ENCODE measurements at regions of chr14 and their contacts with region 1.

Region 1: DNA sequence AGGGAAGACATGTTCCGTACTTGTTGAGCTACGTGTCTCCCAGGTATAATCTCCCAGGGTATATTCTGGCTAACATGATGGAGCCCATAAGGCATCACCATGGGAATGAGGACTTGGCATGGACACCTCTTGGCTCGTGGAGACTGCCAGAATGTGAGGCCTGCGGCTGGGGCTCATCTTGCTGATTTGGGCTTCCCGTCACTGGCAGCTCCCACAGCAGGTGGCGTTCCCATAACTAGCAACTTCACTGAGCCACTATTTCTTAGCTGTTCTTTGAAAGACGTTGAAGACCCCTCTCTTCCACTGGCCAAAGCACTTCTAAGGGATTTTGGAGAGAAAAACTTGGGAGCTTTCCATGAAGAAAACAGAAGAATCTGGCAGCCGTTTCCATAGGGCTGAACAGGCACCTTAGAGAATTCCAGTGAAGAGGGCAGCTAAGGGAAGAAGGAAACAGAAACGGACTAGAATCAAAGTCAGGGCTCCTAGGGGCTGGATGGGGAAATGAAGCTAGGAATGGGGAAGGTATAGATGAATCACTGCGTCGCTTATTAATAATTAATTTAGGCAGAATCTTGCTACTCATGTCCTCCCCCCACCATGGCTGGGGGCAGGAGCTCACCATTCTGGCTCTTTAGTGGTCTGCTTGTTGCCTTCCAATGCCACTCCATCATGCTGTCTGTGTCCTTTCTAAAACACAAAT is 39.7 kb upstream of the FOS start:
- DNase-seq: no peak
- ATAC-seq: no peak
- H3K4me3 ChIP-seq: no peak overlapping the region
- H3K27ac ChIP-seq: peak overlapping the region; percentile 87 to 98 (median 93)
- H3K4me1 ChIP-seq: peaks cover 40 to 43% of the 10 kb centered on the region in 2 donors
- H3K27me3 ChIP-seq: no peaks in the 10 kb centered on the region
- CTCF ChIP-seq: peak in 4 of 5 experiments; percentile 14 to 37 (median 22)
- POLR2A ChIP-seq: no peak

Region 2: DNA sequence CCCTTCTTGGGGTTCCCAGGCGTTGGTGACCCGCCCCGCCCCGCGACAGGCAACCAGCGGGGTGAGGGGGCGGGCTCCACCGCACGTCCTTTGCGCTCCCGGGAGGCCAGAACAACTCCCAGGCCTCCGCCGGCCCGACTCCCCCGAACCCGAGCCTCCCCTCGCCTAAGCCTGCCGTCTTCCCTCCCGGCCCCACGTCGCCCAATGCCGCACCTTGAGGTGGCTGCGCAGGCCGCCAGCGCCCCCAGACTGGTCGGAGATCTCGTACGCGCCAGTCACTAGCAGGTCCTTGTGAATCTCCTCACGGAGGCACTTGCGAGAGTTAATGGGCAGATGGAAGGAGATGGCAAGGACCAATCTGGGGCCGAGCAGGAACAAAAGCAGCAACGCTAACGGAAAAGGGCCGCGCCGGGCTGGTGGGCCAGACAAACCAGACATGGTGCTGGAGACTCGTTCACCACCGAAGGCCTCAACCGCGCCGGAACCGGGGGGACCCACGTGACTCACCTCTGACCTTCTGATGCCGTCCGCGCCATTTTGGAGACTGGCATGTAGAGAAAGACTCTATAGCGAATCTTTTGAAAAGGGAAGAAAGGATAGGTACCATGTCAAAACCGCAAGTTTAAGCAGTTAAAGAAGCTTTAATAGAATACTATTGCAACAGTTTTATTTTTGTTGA is 62.6 kb before region 1 on chr14 and contains the start of gene TMED10:
- in situ Hi-C with region 1: no loop called
- intact Hi-C with region 1: loop called (anchors 1 kb)
- DNase-seq: peak; percentile 86 to 87
- ATAC-seq: peak; percentile 93
- H3K4me3 ChIP-seq: peak within 1 kb of the TSS; percentile 78 to 97 (median 92)
- H3K27ac ChIP-seq: peak within 1 kb of the TSS; percentile 98 to 100 (median 98)
- H3K4me1 ChIP-seq: peaks cover 33 to 35% of the 10 kb centered on the region in 2 donors
- H3K27me3 ChIP-seq: no peaks in the 10 kb centered on the region
- CTCF ChIP-seq: peak in 2 of 5 experiments; percentile 12 to 15
- POLR2A ChIP-seq: peak; percentile 84 to 88
- total RNA-seq, gene TMED10: 161 to 362 (median 255) TPM

Region 3: GRCh38 chr14:75278422-75279161 is 39.7 kb after region 1 on chr14 and contains the start of gene FOS:
- in situ Hi-C with region 1: no loop called
- intact Hi-C with region 1: loop called (anchors 2 kb)
- DNase-seq: peak; percentile 92 to 93
- ATAC-seq: peak; percentile 76 to 80
- H3K4me3 ChIP-seq: peak within 1 kb of the TSS; percentile 84 to 95 (median 90)
- H3K27ac ChIP-seq: peak within 1 kb of the TSS; percentile 98 to 100 (median 100)
- H3K4me1 ChIP-seq: peaks cover 27 to 30% of the 10 kb centered on the region in 2 donors
- H3K27me3 ChIP-seq: no peaks in the 10 kb centered on the region
- CTCF ChIP-seq: peak in 1 of 5 experiments; percentile 19
- POLR2A ChIP-seq: peak; percentile 99 to 100
- total RNA-seq, gene FOS: 16.3 to 110 (median 53.5) TPM

Region 4: GRCh38 chr14:75340921-75341320 is 102.0 kb after region 1 on chr14:
- in situ Hi-C with region 1: no loop called
- intact Hi-C with region 1: loop called (anchors 1 kb)
- DNase-seq: peak; percentile 97 to 100
- ATAC-seq: peak; percentile 96 to 97
- H3K4me3 ChIP-seq: peak overlapping the region; percentile 33 to 42 (median 36)
- H3K27ac ChIP-seq: peak overlapping the region; percentile 94 to 97 (median 94)
- H3K4me1 ChIP-seq: peaks cover 40 to 42% of the 10 kb centered on the region in 2 donors
- H3K27me3 ChIP-seq: no peaks in the 10 kb centered on the region
- CTCF ChIP-seq: peak in 1 of 5 experiments; percentile 37
- POLR2A ChIP-seq: peak; percentile 84 to 93

Measured in gastrocnemius medialis (tissue), 4 donors.